ENCODE measurements at regions of chr11 and their contacts with region 1.

Region 1: DNA sequence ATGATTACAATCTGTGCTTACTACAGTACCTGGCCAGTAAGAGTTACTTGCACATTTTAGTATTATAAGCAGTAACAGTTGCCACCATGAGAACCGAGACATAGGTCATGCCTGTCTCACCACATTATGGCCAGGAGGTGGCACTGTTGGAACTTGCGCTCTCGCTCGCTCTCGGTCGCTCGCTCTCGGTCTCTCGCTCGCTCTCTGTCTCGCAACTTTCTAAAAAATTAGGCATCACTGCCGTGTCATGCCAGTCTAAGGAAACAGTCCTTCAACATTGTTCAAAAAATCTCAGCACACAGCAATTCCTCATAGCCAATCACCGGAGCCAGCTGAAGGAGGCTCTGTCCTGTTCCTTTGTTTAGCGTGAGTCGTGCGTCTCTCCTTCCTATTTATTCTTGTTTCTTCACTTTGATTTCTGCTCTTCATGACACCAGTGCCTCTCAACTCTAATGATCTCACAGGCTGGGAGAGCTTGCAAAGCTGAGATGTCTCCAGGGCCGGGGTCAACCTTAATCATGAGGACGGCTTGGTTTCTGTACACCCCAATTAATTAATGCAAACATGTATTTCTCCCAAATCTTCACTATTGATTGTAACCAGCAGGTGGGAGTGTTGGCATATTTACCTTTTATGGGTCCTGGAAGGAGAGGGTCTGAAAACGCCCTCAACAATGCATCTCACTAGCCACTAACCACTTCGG is 6.3 kb upstream of the ADAMTS8 start:
- DNase-seq: peak; percentile 80 to 87
- H3K4me3 ChIP-seq: peak overlapping the region; percentile 46
- H3K4me3 Mint-ChIP-seq: no peak overlapping the region
- H3K27ac Mint-ChIP-seq: no peak overlapping the region
- H3K4me1 ChIP-seq: no peaks in the 10 kb centered on the region
- H3K4me1 Mint-ChIP-seq: no peaks in the 10 kb centered on the region
- H3K27me3 ChIP-seq: peaks cover 7% of the 10 kb centered on the region
- H3K27me3 Mint-ChIP-seq: peaks cover 31% of the 10 kb centered on the region
- CTCF ChIP-seq: peak; percentile 88 to 98

Region 2: GRCh38 chr11:130213143-130213978 is 221.3 kb before region 1 on chr11:
- CTCF ChIA-PET with region 1: interaction called, 8 read pairs
- POLR2A ChIA-PET with region 1: no interaction called
- intact Hi-C with region 1: loop called (anchors 1 kb)
- DNase-seq: peak; percentile 70 to 83
- H3K4me3 ChIP-seq: no peak overlapping the region
- H3K4me3 Mint-ChIP-seq: no peak overlapping the region
- H3K27ac Mint-ChIP-seq: no peak overlapping the region
- H3K4me1 ChIP-seq: 0 out of 2 replicates have a peak, but pooled peaks cover 9% of the 10 kb centered on the region
- H3K4me1 Mint-ChIP-seq: peaks cover 9% of the 10 kb centered on the region
- H3K27me3 ChIP-seq: no peaks in the 10 kb centered on the region
- H3K27me3 Mint-ChIP-seq: no peaks in the 10 kb centered on the region
- CTCF ChIP-seq: peak; percentile 98 to 99

Region 3: DNA sequence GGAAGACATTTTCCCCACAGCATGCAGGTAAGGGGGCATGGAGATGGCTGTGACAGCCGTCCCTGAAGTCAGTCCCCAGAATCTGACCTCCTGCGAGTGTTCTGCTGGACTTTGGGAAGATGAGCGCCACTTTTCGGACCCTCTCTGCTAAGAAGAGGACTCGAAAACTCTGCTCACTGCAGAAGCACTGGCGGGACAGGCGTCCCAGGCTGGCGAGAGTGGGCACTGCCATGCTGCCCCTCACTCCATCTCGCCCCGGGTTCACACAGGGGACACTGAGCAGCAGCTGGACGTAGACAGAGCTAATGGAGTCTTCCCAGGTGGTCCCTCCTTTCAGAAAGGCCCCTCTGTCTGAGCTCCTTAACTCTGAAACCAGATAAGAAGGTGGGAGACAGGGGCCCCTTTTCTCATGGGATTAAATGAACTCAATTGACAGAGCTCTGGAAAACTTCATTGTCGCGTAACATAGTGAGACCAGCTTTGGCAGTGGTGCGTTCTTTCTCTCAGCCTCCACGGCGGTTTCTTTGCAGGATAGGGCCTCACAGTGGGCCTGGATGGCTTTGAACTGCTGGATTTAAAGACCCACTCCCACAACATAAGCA is 11.0 kb before region 1 on chr11:
- CTCF ChIA-PET with region 1: no interaction called
- POLR2A ChIA-PET with region 1: no interaction called
- intact Hi-C with region 1: no loop called
- DNase-seq: no peak
- H3K4me3 ChIP-seq: no peak overlapping the region
- H3K4me3 Mint-ChIP-seq: no peak overlapping the region
- H3K27ac Mint-ChIP-seq: no peak overlapping the region
- H3K4me1 ChIP-seq: peaks cover 5% of the 10 kb centered on the region
- H3K4me1 Mint-ChIP-seq: peaks cover 10% of the 10 kb centered on the region
- H3K27me3 ChIP-seq: peaks cover 20% of the 10 kb centered on the region
- H3K27me3 Mint-ChIP-seq: peaks cover 44% of the 10 kb centered on the region
- CTCF ChIP-seq: no peak

Region 4: DNA sequence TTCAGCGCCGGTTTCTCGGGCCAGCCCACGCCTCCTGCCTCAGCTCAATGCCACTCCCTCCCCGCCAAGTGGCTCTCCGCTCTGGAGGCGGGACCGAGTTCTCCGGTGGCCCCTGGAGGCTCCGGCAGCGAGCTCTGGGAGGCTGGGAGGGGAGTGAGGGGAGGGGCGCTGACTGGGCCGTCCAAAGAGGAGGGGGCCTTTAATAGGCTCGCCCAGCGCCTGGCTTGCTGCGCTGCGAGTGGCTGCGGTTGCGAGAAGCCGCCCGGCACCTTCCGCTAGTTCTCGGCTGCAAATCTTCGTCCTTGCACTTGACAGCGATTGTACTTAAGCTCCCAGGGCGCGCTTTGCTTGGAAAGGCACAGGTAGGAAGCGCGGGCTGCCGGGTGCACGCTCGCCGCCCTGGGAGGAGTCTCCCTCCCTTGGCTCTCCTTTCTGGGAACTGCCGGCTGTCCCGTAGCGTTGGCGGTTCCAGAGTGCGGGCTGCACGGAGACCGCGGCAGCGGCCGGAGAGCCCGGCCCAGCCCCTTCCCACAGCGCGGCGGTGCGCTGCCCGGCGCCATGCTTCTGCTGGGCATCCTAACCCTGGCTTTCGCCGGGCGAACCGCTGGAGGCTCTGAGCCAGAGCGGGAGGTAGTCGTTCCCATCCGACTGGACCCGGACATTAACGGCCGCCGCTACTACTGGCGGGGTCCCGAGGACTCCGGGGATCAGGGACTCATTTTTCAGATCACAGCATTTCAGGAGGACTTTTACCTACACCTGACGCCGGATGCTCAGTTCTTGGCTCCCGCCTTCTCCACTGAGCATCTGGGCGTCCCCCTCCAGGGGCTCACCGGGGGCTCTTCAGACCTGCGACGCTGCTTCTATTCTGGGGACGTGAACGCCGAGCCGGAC is 14.0 kb after region 1 on chr11 and contains the start of gene ADAMTS15:
- CTCF ChIA-PET with region 1: interaction called, 7 read pairs
- POLR2A ChIA-PET with region 1: no interaction called
- intact Hi-C with region 1: loop called (anchors 1 kb)
- DNase-seq: peak; percentile 90 to 93
- H3K4me3 ChIP-seq: peak within 1 kb of the TSS; percentile 51
- H3K4me3 Mint-ChIP-seq: peak within 1 kb of the TSS; percentile 71
- H3K27ac Mint-ChIP-seq: no peak within 1 kb of the TSS
- H3K4me1 ChIP-seq: no peaks in the 10 kb centered on the region
- H3K4me1 Mint-ChIP-seq: peaks cover 5% of the 10 kb centered on the region
- H3K27me3 ChIP-seq: peaks cover 3% of the 10 kb centered on the region
- H3K27me3 Mint-ChIP-seq: peaks cover 14% of the 10 kb centered on the region
- CTCF ChIP-seq: no peak
- total RNA-seq, gene ADAMTS15: 0.12 and 0.20 TPM in 2 replicates

Region 5: GRCh38 chr11:130611791-130612251 is 177.1 kb after region 1 on chr11:
- CTCF ChIA-PET with region 1: no interaction called
- POLR2A ChIA-PET with region 1: no interaction called
- intact Hi-C with region 1: loop called (anchors 2 kb)
- DNase-seq: no peak
- H3K4me3 ChIP-seq: no peak overlapping the region
- H3K4me3 Mint-ChIP-seq: no peak overlapping the region
- H3K27ac Mint-ChIP-seq: no peak overlapping the region
- H3K4me1 ChIP-seq: no peaks in the 10 kb centered on the region; the same call in 1 of the 2 replicates
- H3K4me1 Mint-ChIP-seq: no peaks in the 10 kb centered on the region
- H3K27me3 ChIP-seq: no peaks in the 10 kb centered on the region
- H3K27me3 Mint-ChIP-seq: peaks cover 5% of the 10 kb centered on the region
- CTCF ChIP-seq: no peak

Region 6: GRCh38 chr11:130666781-130667251 is 232.1 kb after region 1 on chr11:
- CTCF ChIA-PET with region 1: no interaction called
- POLR2A ChIA-PET with region 1: no interaction called
- intact Hi-C with region 1: loop called (anchors 1 kb)
- DNase-seq: no peak
- H3K4me3 ChIP-seq: no peak overlapping the region
- H3K4me3 Mint-ChIP-seq: no peak overlapping the region
- H3K27ac Mint-ChIP-seq: no peak overlapping the region
- H3K4me1 ChIP-seq: no peaks in the 10 kb centered on the region
- H3K4me1 Mint-ChIP-seq: no peaks in the 10 kb centered on the region
- H3K27me3 ChIP-seq: peaks cover 2% of the 10 kb centered on the region; the same call in 1 of the 2 replicates
- H3K27me3 Mint-ChIP-seq: peaks cover 39% of the 10 kb centered on the region
- CTCF ChIP-seq: peak in 1 of 2 experiments; percentile 38

Region 7: DNA sequence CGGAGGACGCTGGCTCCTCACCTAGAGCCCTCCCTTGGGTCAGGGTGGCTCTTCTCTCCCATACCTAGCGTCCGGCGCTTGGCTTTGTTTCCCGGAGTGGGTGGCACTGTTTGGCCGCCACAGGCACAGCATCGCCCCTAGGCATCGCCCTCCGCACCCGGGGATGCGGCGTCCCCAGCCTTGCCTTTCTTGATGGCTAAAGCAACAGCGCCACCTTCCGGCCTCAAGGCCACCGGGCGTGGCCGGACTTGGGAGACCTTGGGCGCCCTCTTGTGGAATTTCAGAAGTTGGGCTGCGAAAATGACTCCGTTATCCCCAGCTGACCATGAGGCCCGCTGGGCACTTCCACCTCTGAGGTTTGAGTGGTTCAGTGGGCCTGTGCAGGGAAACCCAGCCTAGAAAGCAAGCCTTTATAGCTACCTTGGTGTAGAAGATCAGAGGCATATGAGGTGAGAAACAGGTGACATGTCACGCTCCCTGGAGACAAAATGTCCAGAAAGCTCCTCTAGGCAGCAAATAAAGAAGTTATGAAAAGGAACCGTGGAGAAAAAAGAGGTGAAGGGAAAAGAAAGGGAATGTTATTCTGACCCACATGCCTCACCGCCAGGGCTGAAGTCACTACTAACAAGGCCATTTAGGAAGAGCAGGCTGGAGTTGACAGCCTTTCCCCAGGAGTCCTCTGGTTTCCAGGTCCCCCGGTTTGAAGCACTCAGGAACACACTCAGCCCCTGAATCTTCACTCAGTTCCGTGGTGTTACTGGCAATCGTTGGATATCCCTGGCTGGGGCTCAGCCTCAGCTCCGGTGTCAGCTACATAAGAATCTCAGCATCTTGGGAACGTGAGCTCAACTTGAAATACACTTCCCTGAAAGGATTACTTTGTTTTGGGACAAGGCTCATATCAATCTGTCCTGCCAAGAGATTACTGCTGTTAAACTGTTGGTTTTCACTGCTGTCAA is 427.5 kb after region 1 on chr11:
- CTCF ChIA-PET with region 1: interaction called, 132 read pairs
- POLR2A ChIA-PET with region 1: interaction called, 4 read pairs
- intact Hi-C with region 1: loop called (anchors 1 kb)
- DNase-seq: peak; percentile 92 to 95
- H3K4me3 ChIP-seq: no peak overlapping the region
- H3K4me3 Mint-ChIP-seq: no peak overlapping the region
- H3K27ac Mint-ChIP-seq: no peak overlapping the region
- H3K4me1 ChIP-seq: no peaks in the 10 kb centered on the region
- H3K4me1 Mint-ChIP-seq: peaks cover 5% of the 10 kb centered on the region
- H3K27me3 ChIP-seq: no peaks in the 10 kb centered on the region
- H3K27me3 Mint-ChIP-seq: no peaks in the 10 kb centered on the region
- CTCF ChIP-seq: peak; percentile 100

Measured in Caco-2 (cell line).